ENCODE measurements at regions of chr3 and their contacts with region 1.

Region 1: GRCh38 chr3:10764259-10765051 is 51.6 kb upstream of the SLC6A11 start:
- DNase-seq: no peak
- ATAC-seq: no peak
- H3K4me3 ChIP-seq: no peak overlapping the region
- H3K27ac ChIP-seq: no peak overlapping the region
- H3K4me1 ChIP-seq: no peaks in the 10 kb centered on the region
- H3K27me3 ChIP-seq: no peaks in the 10 kb centered on the region

Region 2: DNA sequence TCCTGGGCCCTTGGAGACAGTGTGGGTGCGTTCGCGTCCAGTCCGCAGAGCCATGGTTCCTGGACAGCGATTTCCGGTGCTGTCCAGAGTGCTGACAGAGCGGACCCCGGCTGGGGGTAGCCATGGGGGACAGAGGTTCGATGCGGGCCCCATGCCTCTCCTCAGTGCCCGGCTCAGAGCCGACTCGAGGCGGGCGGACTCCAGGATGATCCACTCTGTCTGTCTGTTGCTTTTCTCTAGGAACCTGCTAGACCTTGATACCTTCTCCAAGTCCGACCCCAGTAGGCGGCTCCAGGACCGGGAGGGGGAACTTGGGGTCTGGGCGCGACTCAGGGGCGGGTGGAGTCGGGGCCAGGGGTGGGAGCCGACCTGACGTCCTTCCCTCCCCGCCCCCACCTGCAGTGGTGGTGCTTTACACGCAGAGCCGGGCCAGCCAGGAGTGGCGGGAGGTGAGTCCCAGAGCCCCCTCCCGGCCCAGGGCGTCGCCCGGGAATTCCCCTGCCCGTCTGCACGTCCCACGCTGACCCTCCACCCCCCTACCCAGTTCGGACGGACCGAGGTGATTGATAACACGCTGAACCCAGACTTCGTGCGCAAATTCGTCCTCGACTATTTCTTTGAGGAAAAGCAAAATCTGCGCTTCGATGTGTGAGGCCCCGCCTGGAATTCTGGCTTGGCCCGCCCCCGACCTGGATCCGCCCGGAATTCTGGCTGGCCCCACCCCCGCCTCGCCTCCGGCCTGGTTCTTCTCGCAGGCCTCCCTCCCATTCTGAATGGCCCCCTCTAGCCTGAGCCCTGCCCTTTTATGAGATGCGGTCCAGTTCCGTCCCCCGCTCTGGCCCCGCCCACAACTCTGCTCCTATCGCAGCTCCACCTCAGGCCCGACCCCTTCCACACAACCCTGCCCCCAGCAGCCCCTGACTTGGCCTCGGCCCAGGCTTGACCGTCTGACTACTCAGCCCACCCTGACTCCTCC is 1059.8 kb before region 1 on chr3:
- intact Hi-C with region 1: no loop called
- DNase-seq: peak; percentile 61 to 79 (median 71)
- ATAC-seq: peak; percentile 67 to 72
- H3K4me3 ChIP-seq: no peak overlapping the region
- H3K27ac ChIP-seq: no peak overlapping the region
- H3K4me1 ChIP-seq: peaks cover 7% of the 10 kb centered on the region
- H3K27me3 ChIP-seq: no peaks in the 10 kb centered on the region

Region 3: DNA sequence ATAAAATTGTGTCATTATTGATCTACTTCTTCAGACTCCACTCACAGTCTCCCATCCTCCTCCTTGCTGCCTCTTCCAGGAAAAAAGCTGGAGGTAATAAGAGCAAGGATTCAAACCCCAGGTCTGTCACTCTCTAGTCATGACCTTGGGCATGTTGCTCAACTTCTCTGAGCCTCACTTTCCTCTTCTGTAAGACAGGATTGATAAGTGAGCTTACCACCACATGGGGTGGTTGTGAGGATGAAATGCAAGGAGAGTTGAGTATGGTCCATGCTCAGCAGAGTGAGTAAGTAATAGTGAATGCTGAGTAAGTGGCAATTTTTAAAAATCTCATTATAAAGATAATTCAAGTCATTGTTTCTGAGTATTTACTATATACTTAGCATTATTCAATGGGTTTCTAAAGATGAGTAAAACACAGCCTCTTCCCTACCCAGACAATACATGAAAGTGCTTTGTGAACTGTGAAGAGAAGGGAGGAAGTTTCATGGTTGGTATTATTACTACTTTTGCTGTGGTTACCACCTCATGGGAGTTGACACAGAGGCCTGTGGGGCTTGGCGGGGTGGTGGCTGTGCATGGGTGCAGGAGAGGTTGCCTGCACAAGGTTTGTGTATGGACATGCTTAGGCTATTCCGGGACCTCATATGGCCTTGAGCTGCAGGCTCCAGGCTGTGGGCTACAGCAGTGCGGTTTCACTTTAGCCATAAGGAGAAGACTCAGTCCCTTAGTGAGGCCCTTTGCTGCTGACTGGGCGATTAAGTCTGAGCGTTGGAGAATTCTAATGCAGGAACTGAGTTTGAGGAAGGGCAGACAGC is 81.6 kb after region 1 on chr3:
- intact Hi-C with region 1: no loop called
- DNase-seq: no peak
- ATAC-seq: peak; percentile 44 to 52
- H3K4me3 ChIP-seq: no peak overlapping the region
- H3K27ac ChIP-seq: no peak overlapping the region
- H3K4me1 ChIP-seq: no peaks in the 10 kb centered on the region
- H3K27me3 ChIP-seq: no peaks in the 10 kb centered on the region

Region 4: GRCh38 chr3:11211531-11212298 is 447.3 kb after region 1 on chr3:
- intact Hi-C with region 1: loop called in 1 of 4 experiments (anchors 10 kb)
- DNase-seq: no peak
- ATAC-seq: peak in 1 of 2 donors; percentile 20
- H3K4me3 ChIP-seq: no peak overlapping the region
- H3K27ac ChIP-seq: no peak overlapping the region
- H3K4me1 ChIP-seq: no peaks in the 10 kb centered on the region
- H3K27me3 ChIP-seq: no peaks in the 10 kb centered on the region